Endothelial cell of umbilical vein (primary cell): ENCODE measurements at regions of chr9 and their contacts with region 1.

Region 1: GRCh38 chr9:105637787-105638395 is 24.4 kb upstream of the TAL2 start:
- DNase-seq: no peak
- H3K4me3 ChIP-seq: no peak overlapping the region
- H3K27ac ChIP-seq: no peak overlapping the region
- H3K4me1 ChIP-seq: no peaks in the 10 kb centered on the region
- H3K27me3 ChIP-seq: no peaks in the 10 kb centered on the region
- CTCF ChIP-seq: peak; percentile 19 to 29
- POLR2A ChIP-seq: no peak

Region 2: DNA sequence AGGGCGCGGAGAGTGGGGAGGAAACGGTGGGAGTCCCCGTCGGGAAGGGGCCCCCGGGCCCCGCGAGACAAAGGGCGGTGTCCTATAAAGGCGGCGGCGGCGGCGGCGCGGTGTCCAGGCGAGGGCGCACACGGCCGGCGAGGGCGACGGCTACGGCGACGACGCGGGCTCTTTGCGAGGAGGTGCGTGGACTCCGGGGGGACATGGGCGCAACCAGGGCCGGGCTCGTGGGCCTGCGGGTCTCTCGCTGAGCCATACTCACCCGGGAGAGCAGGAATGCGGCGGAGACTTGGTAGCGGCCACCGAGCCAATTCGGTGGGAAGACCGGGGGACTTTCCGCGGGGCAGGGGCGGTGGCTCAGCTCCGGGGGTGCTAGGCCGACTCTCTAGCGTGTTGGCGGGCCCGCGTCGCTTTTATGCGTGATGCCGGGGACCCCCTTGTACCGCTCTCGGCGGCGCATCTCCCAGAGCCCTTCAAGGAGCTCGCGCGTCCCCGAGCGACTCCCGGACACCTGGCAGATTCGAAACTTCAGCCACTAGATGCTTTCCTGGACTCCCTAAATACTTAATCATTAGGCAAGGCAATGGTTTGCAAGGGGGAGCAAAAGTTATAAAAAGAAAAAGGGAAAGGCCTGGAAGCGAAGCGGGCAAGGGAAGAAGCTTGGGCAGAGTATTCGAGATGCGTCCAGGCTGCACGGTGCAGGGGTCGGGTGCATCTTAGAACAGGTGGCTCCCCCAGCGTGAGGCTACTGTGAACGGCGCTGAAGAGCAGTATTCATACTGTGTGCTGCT is 18.4 kb after region 1 on chr9:
- CTCF ChIA-PET with region 1: interaction called, 10 read pairs
- POLR2A ChIA-PET with region 1: no interaction called
- dilution Hi-C with region 1: no loop called
- intact Hi-C with region 1: no loop called
- DNase-seq: no peak
- H3K4me3 ChIP-seq: peak overlapping the region in 2 of 3 experiments; percentile 12 to 44
- H3K27ac ChIP-seq: no peak overlapping the region
- H3K4me1 ChIP-seq: peaks cover 3% of the 10 kb centered on the region
- H3K27me3 ChIP-seq: peaks cover 15 to 27% of the 10 kb centered on the region in 2 experiments
- CTCF ChIP-seq: peak in 1 of 2 donors; percentile 16
- POLR2A ChIP-seq: no peak

Region 3: DNA sequence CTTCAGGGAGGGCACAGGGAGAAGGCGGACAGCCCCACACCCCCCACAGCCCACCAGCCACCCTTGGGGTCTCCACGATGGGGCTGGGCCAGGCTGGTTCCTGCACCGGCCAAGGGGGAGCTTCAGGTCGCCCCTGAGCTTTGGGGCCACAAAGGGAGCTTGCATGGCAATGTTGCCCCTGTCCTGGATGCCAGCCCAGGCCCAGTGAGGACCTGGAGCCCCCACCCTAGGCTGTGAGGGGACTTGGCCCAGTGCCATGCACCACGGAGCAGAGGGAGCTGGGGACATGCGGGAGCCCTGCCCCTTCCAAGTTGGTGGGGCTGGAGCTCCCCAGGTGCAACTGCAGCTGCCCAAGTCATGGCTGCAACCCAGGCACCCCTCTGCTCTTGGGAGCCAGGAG is 74.9 kb after region 1 on chr9:
- CTCF ChIA-PET with region 1: interaction called, 11 read pairs
- POLR2A ChIA-PET with region 1: no interaction called
- dilution Hi-C with region 1: no loop called
- intact Hi-C with region 1: no loop called
- DNase-seq: no peak
- H3K4me3 ChIP-seq: no peak overlapping the region
- H3K27ac ChIP-seq: no peak overlapping the region
- H3K4me1 ChIP-seq: no peaks in the 10 kb centered on the region
- H3K27me3 ChIP-seq: no peaks in the 10 kb centered on the region
- CTCF ChIP-seq: no peak
- POLR2A ChIP-seq: no peak